Endothelial cell of umbilical vein (primary cell): ENCODE measurements at regions of chr4 and their contacts with region 1.

Region 1: GRCh38 chr4:156006192-156006591 is 52.5 kb upstream of the CTSO start:
- DNase-seq: no peak
- H3K4me3 ChIP-seq: no peak overlapping the region
- H3K27ac ChIP-seq: no peak overlapping the region
- H3K4me1 ChIP-seq: no peaks in the 10 kb centered on the region
- H3K27me3 ChIP-seq: no peaks in the 10 kb centered on the region
- CTCF ChIP-seq: no peak
- POLR2A ChIP-seq: no peak

Region 2: DNA sequence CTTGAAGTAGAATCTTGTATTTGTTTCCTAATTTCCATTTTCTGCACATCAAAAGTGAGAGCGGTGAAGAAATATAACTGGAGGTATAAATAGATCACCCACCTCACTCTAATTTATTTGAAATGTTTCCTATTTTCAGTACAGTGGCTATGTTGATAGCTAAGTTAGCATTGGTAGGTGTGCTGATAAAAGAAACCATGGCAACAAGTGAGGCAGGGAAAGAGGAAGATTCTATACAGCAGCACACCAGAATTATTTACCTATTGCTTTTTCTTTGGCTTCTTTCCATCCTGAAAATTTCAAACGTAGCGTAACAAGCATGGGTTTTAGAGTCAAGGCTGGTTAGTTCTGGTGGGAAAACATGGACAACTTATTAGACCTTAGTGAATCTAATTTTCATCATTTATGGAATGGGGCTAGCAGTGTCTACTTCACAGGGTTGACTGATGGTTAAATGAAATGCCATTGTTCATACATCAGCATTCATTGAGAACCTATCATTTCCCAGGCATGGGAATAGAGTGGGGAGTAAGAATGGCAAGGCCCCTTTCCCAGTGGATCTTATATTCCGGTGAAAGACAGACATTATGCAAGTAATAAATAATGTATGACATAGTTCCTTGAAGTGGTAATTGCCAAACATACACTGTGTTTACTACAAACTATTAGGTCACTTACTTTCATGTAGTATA is 21.9 kb before region 1 on chr4:
- CTCF ChIA-PET with region 1: no interaction called
- POLR2A ChIA-PET with region 1: no interaction called
- dilution Hi-C with region 1: no loop called
- intact Hi-C with region 1: loop called (anchors 1 kb)
- DNase-seq: no peak
- H3K4me3 ChIP-seq: no peak overlapping the region
- H3K27ac ChIP-seq: no peak overlapping the region
- H3K4me1 ChIP-seq: no peaks in the 10 kb centered on the region
- H3K27me3 ChIP-seq: no peaks in the 10 kb centered on the region
- CTCF ChIP-seq: no peak
- POLR2A ChIP-seq: no peak